ENCODE measurements at regions of chr14 and their contacts with region 1.

Region 1: DNA sequence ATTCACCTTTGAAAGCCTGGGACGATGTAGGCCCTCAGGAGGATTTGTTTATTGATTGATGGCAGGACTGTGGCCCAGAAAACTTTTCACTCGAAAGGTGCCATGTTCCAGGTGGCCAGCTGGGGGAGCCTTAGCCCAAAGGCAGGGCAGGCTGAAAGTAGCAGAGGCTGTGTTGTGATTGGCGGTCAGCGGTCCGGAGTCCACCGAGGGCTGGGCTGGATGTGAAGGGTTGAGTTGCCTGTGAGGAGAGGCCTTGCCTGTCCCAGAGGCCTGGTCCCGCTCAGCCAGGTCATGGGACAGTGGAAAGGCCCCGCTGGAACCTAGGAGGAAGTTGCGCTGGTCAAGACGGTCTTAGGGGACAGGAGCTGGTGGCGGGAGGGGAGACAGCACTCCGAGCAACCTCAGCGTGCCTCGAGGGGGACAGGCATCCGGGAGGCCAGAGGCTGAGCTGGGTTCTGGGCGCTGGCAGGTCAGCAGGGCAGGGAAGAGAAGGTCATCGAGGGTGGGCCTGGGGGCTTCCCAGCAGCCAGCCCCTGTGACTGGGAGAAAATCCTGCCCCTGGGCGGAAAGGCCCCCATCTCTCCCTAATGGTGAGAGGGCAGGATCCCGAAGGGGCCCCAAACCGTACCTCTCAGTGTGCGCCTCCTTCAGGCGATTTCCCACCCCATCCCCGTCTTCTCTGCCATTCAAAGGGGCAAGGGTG is 26.3 kb downstream of the CMA1 start:
- DNase-seq: peak; percentile 74
- H3K4me3 Mint-ChIP-seq: peak overlapping the region; percentile 60
- H3K27ac Mint-ChIP-seq: no peak overlapping the region
- H3K4me1 Mint-ChIP-seq: peaks cover 21% of the 10 kb centered on the region
- H3K27me3 Mint-ChIP-seq: no peaks in the 10 kb centered on the region

Region 2: DNA sequence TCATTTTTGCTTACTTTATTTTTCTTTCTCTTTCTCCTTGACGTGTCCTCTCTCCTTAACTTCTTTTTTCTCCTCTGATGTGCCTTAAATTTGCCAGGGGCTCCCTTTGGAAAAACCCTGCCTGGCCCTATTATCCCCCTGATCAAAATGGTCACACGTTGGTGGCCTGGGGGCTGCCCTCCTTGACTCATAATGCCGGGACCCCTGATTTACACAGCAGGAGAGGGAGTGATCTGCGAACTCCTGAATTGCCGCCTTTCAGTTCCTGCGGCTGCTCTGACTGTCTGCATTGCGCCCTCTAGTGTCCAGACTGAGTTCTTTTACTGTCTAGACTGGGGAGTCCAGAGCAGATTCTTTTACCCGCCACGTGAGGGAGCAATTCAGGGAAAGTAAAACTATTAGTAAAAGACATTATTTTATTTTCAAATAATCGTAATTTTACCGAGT is 197.1 kb after region 1 on chr14:
- CTCF ChIA-PET with region 1: interaction called, 12 read pairs
- POLR2A ChIA-PET with region 1: no interaction called
- intact Hi-C with region 1: loop called (anchors 1 kb)
- DNase-seq: peak; percentile 81
- H3K4me3 Mint-ChIP-seq: peak overlapping the region; percentile 63
- H3K27ac Mint-ChIP-seq: peak overlapping the region; percentile 72
- H3K4me1 Mint-ChIP-seq: peaks cover 50% of the 10 kb centered on the region
- H3K27me3 Mint-ChIP-seq: no peaks in the 10 kb centered on the region